ENCODE measurements at regions of chr5 and their contacts with region 1.

Region 1: DNA sequence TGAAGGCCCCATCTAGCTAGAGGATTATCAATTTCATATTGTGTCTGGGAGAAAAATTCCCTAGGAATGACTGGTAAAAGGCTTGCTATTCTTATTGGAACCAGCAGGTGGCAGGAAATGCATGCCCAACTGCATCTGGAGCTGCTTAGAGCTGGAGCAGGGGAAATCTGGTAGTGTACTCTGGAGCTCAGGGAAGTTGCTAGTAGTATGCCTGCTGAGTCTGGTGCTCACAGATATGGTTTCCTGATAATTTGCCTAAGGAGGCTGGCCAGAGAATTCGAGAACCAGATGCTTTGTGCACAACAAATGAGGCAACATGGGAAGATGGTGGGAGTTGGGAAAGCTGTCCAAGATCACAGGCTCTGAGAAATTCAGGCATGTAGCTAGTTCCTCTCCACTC is 53.7 kb downstream of the G3BP1 start:
- DNase-seq: peak; percentile 50
- H3K4me3 ChIP-seq: no peak overlapping the region
- H3K27ac ChIP-seq: no peak overlapping the region
- H3K4me1 ChIP-seq: no peaks in the 10 kb centered on the region
- CTCF ChIP-seq: peak; percentile 89

Region 2: GRCh38 chr5:152142840-152143469 is 317.5 kb after region 1 on chr5:
- CTCF ChIA-PET with region 1: no interaction called
- POLR2A ChIA-PET with region 1: interaction called, 3 read pairs
- intact Hi-C with region 1: loop called (anchors 1 kb)
- DNase-seq: peak; percentile 56
- H3K4me3 ChIP-seq: no peak overlapping the region
- H3K27ac ChIP-seq: no peak overlapping the region
- H3K4me1 ChIP-seq: no peaks in the 10 kb centered on the region
- CTCF ChIP-seq: peak; percentile 85

Region 3: GRCh38 chr5:152349683-152350526 is 524.5 kb after region 1 on chr5:
- CTCF ChIA-PET with region 1: interaction called, 4 read pairs
- POLR2A ChIA-PET with region 1: no interaction called
- intact Hi-C with region 1: loop called (anchors 5 kb)
- DNase-seq: peak; percentile 37
- H3K4me3 ChIP-seq: no peak overlapping the region
- H3K27ac ChIP-seq: no peak overlapping the region
- H3K4me1 ChIP-seq: no peaks in the 10 kb centered on the region
- CTCF ChIP-seq: peak; percentile 90

Region 4: DNA sequence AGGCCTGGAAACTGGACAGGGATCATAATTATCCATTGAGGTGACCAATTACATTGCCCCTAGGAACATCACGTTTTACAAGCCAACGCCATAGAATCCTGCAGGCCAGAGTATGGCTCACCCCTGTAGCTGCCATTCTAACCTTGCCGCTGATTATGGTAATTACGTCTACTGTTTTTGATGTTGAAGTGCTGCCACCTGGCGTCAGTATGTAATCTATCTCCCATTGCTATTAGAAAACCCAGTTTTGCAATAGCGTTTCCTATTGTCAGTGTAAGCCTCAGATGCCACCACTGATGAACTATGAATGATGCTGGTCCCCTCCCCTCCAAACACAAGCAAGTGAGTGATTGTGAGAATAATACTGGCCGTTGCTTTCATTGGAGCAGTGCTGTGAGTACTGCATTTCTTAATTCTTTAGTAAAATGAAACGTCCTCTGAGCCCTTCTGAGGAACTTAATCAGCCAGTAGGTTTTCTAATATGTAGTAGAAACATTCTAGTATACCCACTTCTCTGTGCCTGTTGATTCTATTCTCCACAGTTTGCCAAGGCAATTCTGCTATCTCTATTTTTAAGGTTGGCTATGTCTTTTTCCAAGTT is 680.1 kb after region 1 on chr5:
- CTCF ChIA-PET with region 1: no interaction called
- POLR2A ChIA-PET with region 1: no interaction called
- intact Hi-C with region 1: loop called (anchors 10 kb)
- DNase-seq: peak; percentile 49
- H3K4me3 ChIP-seq: no peak overlapping the region
- H3K27ac ChIP-seq: no peak overlapping the region
- H3K4me1 ChIP-seq: no peaks in the 10 kb centered on the region
- CTCF ChIP-seq: peak; percentile 78